ENCODE measurements at regions of chr1 and their contacts with region 1.

Region 1: GRCh38 chr1:52474807-52475206 is 70.4 kb downstream of the PRPF38A start:
- DNase-seq: no peak
- H3K4me3 Mint-ChIP-seq: no peak overlapping the region
- H3K27ac Mint-ChIP-seq: no peak overlapping the region
- H3K4me1 Mint-ChIP-seq: no peaks in the 10 kb centered on the region
- H3K27me3 Mint-ChIP-seq: no peaks in the 10 kb centered on the region
- CTCF ChIP-seq: no peak

Region 2: GRCh38 chr1:52416811-52417210 is 58.0 kb before region 1 on chr1:
- CTCF ChIA-PET with region 1: no interaction called
- intact Hi-C with region 1: loop called (anchors 2 kb)
- DNase-seq: no peak
- H3K4me3 Mint-ChIP-seq: no peak overlapping the region
- H3K27ac Mint-ChIP-seq: no peak overlapping the region
- H3K4me1 Mint-ChIP-seq: no peaks in the 10 kb centered on the region
- H3K27me3 Mint-ChIP-seq: no peaks in the 10 kb centered on the region
- CTCF ChIP-seq: no peak

Measured in Calu3 (cell line).